Adrenal gland (tissue), 19 donors: ENCODE measurements at regions of chr3 and their contacts with region 1.

Region 1: DNA sequence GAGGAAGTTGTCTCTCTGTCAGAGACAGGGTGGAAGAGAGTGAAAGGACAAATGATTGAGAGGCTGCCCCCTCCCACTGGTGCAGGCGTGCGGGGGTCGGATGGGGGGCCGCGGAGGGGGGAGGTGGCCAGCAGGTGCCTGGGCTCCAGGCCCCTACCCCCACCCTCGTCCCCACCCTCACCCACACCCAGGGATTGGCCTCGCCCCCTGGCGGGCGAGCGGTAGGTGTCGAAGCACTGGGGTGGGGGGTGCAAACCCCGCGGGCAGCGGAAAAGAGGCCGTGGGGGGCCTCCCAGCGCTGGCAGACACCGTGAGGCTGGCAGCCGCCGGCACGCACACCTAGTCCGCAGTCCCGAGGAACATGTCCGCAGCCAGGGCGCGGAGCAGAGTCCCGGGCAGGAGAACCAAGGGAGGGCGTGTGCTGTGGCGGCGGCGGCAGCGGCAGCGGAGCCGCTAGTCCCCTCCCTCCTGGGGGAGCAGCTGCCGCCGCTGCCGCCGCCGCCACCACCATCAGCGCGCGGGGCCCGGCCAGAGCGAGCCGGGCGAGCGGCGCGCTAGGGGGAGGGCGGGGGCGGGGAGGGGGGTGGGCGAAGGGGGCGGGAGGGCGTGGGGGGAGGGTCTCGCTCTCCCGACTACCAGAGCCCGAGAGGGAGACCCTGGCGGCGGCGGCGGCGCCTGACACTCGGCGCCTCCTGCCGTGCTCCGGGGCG is at the start of gene KAT2B:
- DNase-seq: peak; percentile 71 to 86 (median 80)
- H3K4me3 ChIP-seq: peak within 1 kb of the TSS; percentile 61 to 99 (median 76)
- H3K27ac ChIP-seq: peak within 1 kb of the TSS; percentile 79 to 98 (median 88)
- H3K4me1 ChIP-seq: peaks cover 33 to 39% of the 10 kb centered on the region in 2 donors
- H3K27me3 ChIP-seq: no peaks in the 10 kb centered on the region
- CTCF ChIP-seq: peak; percentile 55 to 70 (median 66)
- POLR2A ChIP-seq: peak; percentile 16 to 54
- total RNA-seq, gene KAT2B: 17.0 to 32.2 (median 21.4) TPM

Region 2: GRCh38 chr3:19946832-19947548 is 92.9 kb before region 1 on chr3 and contains the start of gene RAB5A:
- intact Hi-C with region 1: loop called in 1 of 2 experiments (anchors 10 kb)
- DNase-seq: peak; percentile 98 to 99 (median 98)
- H3K4me3 ChIP-seq: peak within 1 kb of the TSS; percentile 57 to 94 (median 84)
- H3K27ac ChIP-seq: peak within 1 kb of the TSS; percentile 85 to 99 (median 98)
- H3K4me1 ChIP-seq: peaks cover 16 to 33% of the 10 kb centered on the region in 2 donors
- H3K27me3 ChIP-seq: no peaks in the 10 kb centered on the region
- CTCF ChIP-seq: no peak
- POLR2A ChIP-seq: peak; percentile 76 to 93
- total RNA-seq, gene RAB5A: 36.8 to 68.6 (median 54.1) TPM

Region 3: DNA sequence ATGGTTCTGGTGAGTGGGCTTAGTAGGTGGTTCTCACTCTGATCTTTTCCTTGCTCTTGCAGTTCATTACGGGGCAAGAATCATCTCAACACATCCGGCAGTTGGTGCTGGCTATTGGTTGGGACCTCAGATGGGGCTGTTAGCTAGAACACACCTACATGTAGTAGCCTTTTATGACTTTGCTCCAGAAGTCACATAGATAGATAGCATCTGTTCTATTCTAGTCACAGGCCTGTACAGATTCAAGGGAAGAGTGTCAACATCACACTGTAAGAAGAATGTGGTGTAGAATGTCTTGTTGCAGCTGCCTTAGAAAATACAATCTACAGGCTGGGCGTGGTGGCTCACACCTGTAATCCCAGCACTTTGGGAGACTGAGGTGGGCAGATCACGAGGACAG is 78.0 kb before region 1 on chr3:
- intact Hi-C with region 1: no loop called
- DNase-seq: no peak
- H3K4me3 ChIP-seq: no peak overlapping the region
- H3K27ac ChIP-seq: peak overlapping the region in 1 of 5 donors; percentile 6
- H3K4me1 ChIP-seq: peaks cover 7 to 16% of the 10 kb centered on the region in 2 donors
- H3K27me3 ChIP-seq: no peaks in the 10 kb centered on the region
- CTCF ChIP-seq: no peak
- POLR2A ChIP-seq: no peak

Region 4: DNA sequence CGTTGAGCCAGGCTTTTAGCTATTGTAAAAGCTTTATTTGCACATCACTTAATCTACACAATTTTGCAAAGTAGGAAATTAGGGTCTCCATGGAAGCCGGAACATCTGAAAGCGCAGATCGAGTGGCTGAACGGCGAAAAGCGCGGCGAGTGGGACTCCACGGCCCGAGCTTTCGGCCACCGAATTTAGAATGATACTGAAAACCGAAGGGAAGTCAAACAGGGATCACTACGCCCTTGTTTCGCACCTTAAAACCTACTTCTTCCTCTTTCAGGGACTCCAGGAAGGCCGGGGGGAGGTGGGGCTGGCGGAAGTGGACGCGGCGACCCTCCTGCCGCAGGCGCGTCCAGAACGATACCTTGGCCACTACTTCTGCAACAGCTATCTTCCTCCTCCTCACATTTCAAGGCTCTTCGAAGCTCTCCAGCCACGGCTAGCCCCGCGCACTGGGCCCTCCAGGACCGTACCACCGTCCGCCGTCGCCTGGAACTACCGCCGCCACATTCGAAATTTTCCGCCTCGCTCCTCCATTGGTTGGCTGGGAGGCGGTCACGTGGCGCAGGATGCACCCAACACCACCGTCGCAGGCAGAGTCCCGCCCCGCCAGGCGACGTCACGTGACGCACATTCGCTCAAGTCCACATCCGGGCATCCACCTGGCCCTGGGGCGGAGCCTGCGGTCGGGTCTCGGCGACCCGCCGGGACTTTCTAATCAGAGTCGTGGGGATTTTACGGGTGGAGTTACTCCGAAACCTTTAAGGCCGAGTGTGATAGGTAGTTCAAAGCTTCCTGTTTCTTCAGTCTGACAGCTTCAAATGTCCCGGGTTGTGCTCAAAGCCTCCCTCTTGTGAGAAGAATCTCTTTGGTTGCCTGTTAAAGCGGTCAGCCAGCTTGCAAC is 146.0 kb after region 1 on chr3 and contains the start of gene SGO1:
- intact Hi-C with region 1: loop called in 1 of 2 experiments (anchors 10 kb)
- DNase-seq: peak; percentile 99 to 100 (median 99)
- H3K4me3 ChIP-seq: peak within 1 kb of the TSS; percentile 7 to 65 (median 48)
- H3K27ac ChIP-seq: peak within 1 kb of the TSS; percentile 37 to 91 (median 89)
- H3K4me1 ChIP-seq: peaks cover 0 to 11% of the 10 kb centered on the region in 2 donors
- H3K27me3 ChIP-seq: no peaks in the 10 kb centered on the region
- CTCF ChIP-seq: no peak
- POLR2A ChIP-seq: peak; percentile 49 to 91
- total RNA-seq, gene SGO1: 0.41 to 4.2 (median 0.61) TPM in 7 of 9 donors, not detected in the others